Activated CD8-positive, alpha-beta T cell treated with anti-CD3 and anti-CD28 coated beads for 36 hours (primary cell): ENCODE measurements at regions of chr6 and their contacts with region 1.

Region 1: GRCh38 chr6:111973118-111973761 is 80.7 kb upstream of the CCN6 start:
- DNase-seq: peak; percentile 75
- ATAC-seq: peak; percentile 85
- H3K4me3 Mint-ChIP-seq: peak overlapping the region; percentile 63
- H3K27ac Mint-ChIP-seq: peak overlapping the region; percentile 93
- H3K4me1 Mint-ChIP-seq: peaks cover 64% of the 10 kb centered on the region
- H3K27me3 Mint-ChIP-seq: no peaks in the 10 kb centered on the region
- CTCF ChIP-seq: no peak

Region 2: GRCh38 chr6:111721753-111722154 is 251.5 kb before region 1 on chr6:
- CTCF ChIA-PET with region 1: no interaction called
- POLR2A ChIA-PET with region 1: no interaction called
- intact Hi-C with region 1: no loop called
- DNase-seq: peak; percentile 67
- ATAC-seq: peak; percentile 40
- H3K4me3 Mint-ChIP-seq: no peak overlapping the region
- H3K27ac Mint-ChIP-seq: peak overlapping the region; percentile 79
- H3K4me1 Mint-ChIP-seq: peaks cover 95% of the 10 kb centered on the region
- H3K27me3 Mint-ChIP-seq: no peaks in the 10 kb centered on the region
- CTCF ChIP-seq: peak; percentile 66

Region 3: GRCh38 chr6:111777357-111777756 is 195.9 kb before region 1 on chr6:
- CTCF ChIA-PET with region 1: no interaction called
- POLR2A ChIA-PET with region 1: no interaction called
- intact Hi-C with region 1: no loop called
- DNase-seq: no peak
- ATAC-seq: peak; percentile 47
- H3K4me3 Mint-ChIP-seq: no peak overlapping the region
- H3K27ac Mint-ChIP-seq: peak overlapping the region; percentile 82
- H3K4me1 Mint-ChIP-seq: peaks cover 90% of the 10 kb centered on the region
- H3K27me3 Mint-ChIP-seq: no peaks in the 10 kb centered on the region
- CTCF ChIP-seq: no peak

Region 4: GRCh38 chr6:111922454-111923297 is 50.6 kb before region 1 on chr6:
- CTCF ChIA-PET with region 1: no interaction called
- POLR2A ChIA-PET with region 1: no interaction called
- intact Hi-C with region 1: loop called (anchors 5 kb)
- DNase-seq: no peak
- ATAC-seq: no peak
- H3K4me3 Mint-ChIP-seq: no peak overlapping the region
- H3K27ac Mint-ChIP-seq: peak overlapping the region; percentile 71
- H3K4me1 Mint-ChIP-seq: peaks cover 32% of the 10 kb centered on the region
- H3K27me3 Mint-ChIP-seq: no peaks in the 10 kb centered on the region
- CTCF ChIP-seq: no peak

Region 5: DNA sequence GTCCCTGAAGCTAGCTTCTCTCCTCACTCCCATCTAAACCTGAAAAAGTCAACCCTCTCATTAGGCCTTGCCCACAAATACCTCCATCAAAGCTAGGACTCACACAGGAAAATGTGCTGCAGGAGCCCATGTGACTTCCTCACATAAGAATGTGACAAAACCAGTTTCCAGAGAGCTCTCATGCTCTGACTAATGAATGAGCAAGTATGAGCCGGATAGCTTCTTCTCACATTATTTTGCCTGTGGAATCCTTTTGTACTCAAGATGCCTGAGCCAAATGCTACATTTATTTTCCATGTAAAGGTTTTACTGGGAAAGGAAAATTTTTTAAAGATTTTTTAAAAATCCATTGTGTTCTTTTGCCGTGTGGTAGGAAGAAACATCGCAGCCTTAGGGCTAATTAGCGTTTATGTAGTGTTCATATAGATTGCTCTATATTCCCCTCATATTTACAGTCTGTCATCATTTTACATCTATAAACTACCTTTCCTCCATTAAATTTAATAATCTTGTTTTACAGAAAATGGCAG is 12.0 kb after region 1 on chr6:
- CTCF ChIA-PET with region 1: interaction called, 19 read pairs
- POLR2A ChIA-PET with region 1: interaction called, 9 read pairs
- intact Hi-C with region 1: no loop called
- DNase-seq: peak; percentile 67
- ATAC-seq: peak; percentile 69
- H3K4me3 Mint-ChIP-seq: no peak overlapping the region
- H3K27ac Mint-ChIP-seq: peak overlapping the region; percentile 88
- H3K4me1 Mint-ChIP-seq: peaks cover 83% of the 10 kb centered on the region
- H3K27me3 Mint-ChIP-seq: no peaks in the 10 kb centered on the region
- CTCF ChIP-seq: no peak

Region 6: GRCh38 chr6:112005013-112005371 is 31.8 kb after region 1 on chr6:
- CTCF ChIA-PET with region 1: no interaction called
- POLR2A ChIA-PET with region 1: no interaction called
- intact Hi-C with region 1: no loop called
- DNase-seq: no peak
- ATAC-seq: no peak
- H3K4me3 Mint-ChIP-seq: no peak overlapping the region
- H3K27ac Mint-ChIP-seq: no peak overlapping the region
- H3K4me1 Mint-ChIP-seq: peaks cover 11% of the 10 kb centered on the region
- H3K27me3 Mint-ChIP-seq: no peaks in the 10 kb centered on the region
- CTCF ChIP-seq: no peak